Activated CD4-positive, alpha-beta memory T cell treated with anti-CD3 and anti-CD28 coated beads, Interleukin-2, amount 10 ng/mL, durations not matched to agents 7 days and 5 days (primary cell): ENCODE measurements at regions of chr9 and their contacts with region 1.

Region 1: GRCh38 chr9:5186416-5187169 is 1.2 kb upstream of the INSL6 start:
- DNase-seq: peak; percentile 70
- H3K4me3 Mint-ChIP-seq: no peak overlapping the region
- H3K27ac Mint-ChIP-seq: no peak overlapping the region
- H3K4me1 Mint-ChIP-seq: peaks cover 19% of the 10 kb centered on the region
- H3K27me3 Mint-ChIP-seq: no peaks in the 10 kb centered on the region

Region 2: DNA sequence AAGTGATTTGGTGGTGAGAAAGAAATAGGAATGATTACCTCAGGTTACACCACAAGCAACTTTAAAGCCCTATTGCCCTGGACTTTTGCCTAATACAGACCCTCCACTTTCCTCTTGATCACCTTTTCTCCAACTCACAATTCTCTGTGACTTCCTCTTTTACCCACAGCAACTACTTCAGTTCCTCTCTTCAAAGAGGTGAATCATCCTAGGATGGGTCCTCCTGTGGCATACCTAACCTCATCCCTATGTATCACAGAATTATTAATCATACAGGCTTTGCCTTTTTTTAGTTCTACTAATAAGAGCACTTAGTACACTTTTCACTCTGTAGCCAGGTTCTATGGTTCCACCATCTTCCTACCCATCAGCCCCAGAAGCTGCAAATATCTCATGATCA is 18.5 kb after region 1 on chr9:
- CTCF ChIA-PET with region 1: no interaction called
- POLR2A ChIA-PET with region 1: no interaction called
- DNase-seq: no peak
- H3K4me3 Mint-ChIP-seq: no peak overlapping the region
- H3K27ac Mint-ChIP-seq: no peak overlapping the region
- H3K4me1 Mint-ChIP-seq: peaks cover 8% of the 10 kb centered on the region
- H3K27me3 Mint-ChIP-seq: no peaks in the 10 kb centered on the region

Region 3: GRCh38 chr9:5425006-5425628 is 238.5 kb after region 1 on chr9:
- CTCF ChIA-PET with region 1: interaction called, 75 read pairs
- POLR2A ChIA-PET with region 1: interaction called, 4 read pairs
- DNase-seq: no peak
- H3K4me3 Mint-ChIP-seq: no peak overlapping the region
- H3K27ac Mint-ChIP-seq: no peak overlapping the region
- H3K4me1 Mint-ChIP-seq: no peaks in the 10 kb centered on the region
- H3K27me3 Mint-ChIP-seq: no peaks in the 10 kb centered on the region

Region 4: DNA sequence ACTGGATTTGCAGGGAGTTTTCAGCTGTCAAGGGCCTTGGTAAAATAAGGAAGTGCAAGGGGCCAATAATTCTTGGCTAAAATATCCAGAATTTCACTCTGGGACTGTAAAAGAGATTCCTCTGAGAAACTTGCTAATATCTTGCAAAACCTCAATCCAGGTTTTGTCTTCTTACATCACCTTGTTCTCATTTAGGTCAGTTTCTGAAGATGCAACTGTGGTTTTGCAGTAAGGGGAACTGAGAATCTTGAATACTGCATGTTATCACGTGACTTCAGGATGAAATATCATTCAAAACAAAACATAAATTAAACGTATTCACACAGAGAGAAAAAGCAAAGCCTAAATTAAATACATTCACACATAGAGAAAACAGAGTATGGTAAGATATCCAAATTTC is 407.3 kb after region 1 on chr9:
- CTCF ChIA-PET with region 1: interaction called, 38 read pairs
- POLR2A ChIA-PET with region 1: no interaction called
- DNase-seq: no peak
- H3K4me3 Mint-ChIP-seq: no peak overlapping the region
- H3K27ac Mint-ChIP-seq: no peak overlapping the region
- H3K4me1 Mint-ChIP-seq: peaks cover 25% of the 10 kb centered on the region
- H3K27me3 Mint-ChIP-seq: peaks cover 5% of the 10 kb centered on the region